ENCODE measurements at regions of chr20 and their contacts with region 1.

Region 1: DNA sequence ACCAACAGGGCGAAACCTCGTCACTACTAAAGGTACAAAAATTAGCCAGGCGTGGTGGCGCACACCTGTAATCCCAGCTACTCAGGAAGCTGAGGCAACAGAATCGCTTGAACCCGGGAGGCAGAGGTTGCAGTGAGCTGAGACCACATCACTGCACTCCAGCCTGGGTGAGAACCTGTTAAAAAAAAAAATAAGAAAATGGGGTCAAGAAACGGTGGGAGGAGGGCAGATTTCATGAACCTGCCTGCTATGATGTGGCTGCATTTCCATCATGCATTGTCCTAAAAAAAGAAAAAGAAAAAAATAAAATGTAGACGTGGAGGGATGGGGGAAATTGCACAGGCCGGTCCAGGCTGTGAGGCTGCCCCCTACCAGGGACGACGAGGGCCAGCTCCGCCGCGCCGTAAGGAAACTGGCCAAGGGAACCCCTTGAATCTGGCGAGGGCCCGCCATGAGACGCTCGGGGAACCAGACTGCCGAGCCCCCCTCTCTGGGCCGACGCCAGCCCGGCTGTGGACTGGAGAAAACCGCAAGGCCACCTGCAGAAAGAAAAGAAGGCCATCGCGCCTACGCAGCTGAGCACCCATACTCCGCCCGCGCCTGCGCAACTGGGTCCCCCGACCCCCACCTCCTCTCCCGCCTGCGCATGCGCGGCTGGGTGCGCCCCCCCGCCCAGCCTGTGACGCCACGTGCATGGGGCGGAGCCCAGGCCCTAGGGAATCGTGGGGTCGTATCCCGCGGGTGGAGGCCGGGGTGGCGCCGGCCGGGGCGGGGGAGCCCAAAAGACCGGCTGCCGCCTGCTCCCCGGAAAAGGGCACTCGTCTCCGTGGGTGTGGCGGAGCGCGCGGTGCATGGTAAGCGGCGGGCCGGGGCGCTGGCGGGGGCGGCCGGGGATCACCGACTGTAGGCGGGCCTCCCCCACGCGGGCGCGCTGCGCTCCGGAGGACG is at the start of gene ENTPD6:
- DNase-seq: peak; percentile 94
- ATAC-seq: peak; percentile 91 to 93
- total RNA-seq, gene ENTPD6: 110 to 127 TPM

Region 2: GRCh38 chr20:23513164-23513563 is 1682.1 kb before region 1 on chr20:
- intact Hi-C with region 1: no loop called
- DNase-seq: no peak
- ATAC-seq: no peak

Region 3: DNA sequence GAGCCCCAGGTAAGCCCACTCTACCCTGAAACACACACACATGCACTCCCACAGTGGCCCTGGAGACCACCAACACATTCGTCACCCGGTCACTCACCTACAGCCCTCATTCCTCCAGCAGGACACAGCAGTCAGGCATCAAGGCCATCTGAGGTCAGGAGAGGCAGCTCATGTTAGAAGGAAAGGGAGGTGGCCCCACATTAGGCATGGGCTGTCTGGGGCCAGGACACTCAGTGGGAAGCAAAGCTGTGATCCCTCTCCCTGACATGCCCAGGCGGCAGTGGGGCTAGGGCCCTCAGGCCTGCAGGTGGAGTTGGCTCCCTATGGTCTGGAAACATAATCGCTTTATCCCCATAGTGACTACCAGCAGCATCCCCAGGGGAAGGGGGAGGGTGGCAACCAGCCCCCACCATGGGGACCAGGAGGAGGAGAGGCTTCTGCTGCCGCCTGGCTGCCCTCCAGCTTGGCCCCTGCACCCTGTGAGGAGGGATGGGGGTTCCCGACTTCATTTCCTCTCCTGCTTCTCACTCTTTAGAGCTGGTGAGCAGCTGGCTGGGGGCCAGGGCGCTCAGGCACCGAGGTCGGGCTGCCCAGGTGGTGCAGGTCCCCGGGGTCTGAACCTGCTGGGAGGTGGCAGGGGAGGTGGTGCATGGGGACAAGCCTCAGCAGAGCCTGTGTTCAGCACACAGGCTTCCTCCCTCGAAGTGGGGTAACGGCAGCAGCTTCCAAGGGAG is 322.8 kb before region 1 on chr20:
- intact Hi-C with region 1: no loop called
- DNase-seq: no peak
- ATAC-seq: no peak

Region 4: GRCh38 chr20:25136643-25137559 is 58.4 kb before region 1 on chr20:
- intact Hi-C with region 1: no loop called
- DNase-seq: peak; percentile 80
- ATAC-seq: peak; percentile 96 to 99

Region 5: DNA sequence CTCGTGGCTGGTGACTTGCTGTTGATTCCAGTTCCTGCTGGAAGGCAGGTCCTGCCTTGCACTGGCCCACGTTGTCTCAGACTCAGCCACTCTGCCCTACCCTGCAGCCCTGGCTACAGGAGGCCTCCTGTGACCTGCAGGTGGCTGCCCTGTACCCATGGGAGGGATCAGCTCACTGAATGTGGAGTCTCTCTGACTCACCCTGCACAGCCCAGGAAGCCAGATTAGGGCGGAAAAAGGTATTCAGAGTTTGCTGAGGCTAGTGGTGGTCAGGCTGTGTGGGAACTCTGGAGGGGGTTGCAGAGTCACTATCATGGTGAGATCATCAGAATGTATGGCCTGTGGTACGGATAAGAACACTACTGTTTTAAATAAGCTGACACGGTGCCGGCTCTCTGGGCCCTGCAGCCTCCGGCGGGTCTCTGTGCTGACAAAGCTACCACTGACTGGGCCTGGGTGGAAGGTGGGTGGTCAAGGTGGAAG is 27.9 kb after region 1 on chr20:
- intact Hi-C with region 1: no loop called
- DNase-seq: no peak
- ATAC-seq: no peak

Region 6: GRCh38 chr20:25247956-25248785 is 52.9 kb after region 1 on chr20 and contains the start of gene PYGB:
- intact Hi-C with region 1: loop called in 1 of 2 experiments (anchors 5 kb)
- DNase-seq: peak; percentile 79
- ATAC-seq: peak; percentile 88 to 93
- total RNA-seq, gene PYGB: 103 to 152 TPM